ENCODE measurements at regions of chr14 and their contacts with region 1.

Region 1: GRCh38 chr14:81990312-81990761 is 456.7 kb upstream of the SEL1L start:
- DNase-seq: peak; percentile 26
- CTCF ChIP-seq: peak; percentile 88

Region 2: DNA sequence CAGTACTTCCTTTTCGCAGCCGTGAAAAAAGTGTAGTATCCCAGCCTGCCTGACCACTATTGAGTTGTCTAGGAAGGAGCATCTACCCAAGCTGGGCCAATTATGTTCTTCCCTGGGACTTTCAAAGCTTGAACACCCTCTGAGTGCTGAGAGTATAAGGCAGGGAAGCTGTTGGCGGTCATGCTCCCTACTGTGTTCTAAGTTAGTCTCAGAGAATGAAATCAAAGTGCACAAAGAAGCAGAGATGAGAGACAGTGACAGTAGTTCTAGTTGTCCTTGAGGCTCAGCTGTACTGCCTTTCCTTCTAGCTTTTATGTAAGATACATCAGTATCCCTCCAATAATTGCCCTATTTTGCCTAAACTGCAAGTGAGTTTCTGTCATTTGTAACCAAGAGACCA is 29.6 kb before region 1 on chr14:
- CTCF ChIA-PET with region 1: interaction called, 10 read pairs
- POLR2A ChIA-PET with region 1: no interaction called
- DNase-seq: no peak
- CTCF ChIP-seq: no peak

Region 3: GRCh38 chr14:81971911-81972310 is 18.4 kb before region 1 on chr14:
- CTCF ChIA-PET with region 1: interaction called, 11 read pairs
- POLR2A ChIA-PET with region 1: no interaction called
- DNase-seq: no peak
- CTCF ChIP-seq: no peak

Region 4: DNA sequence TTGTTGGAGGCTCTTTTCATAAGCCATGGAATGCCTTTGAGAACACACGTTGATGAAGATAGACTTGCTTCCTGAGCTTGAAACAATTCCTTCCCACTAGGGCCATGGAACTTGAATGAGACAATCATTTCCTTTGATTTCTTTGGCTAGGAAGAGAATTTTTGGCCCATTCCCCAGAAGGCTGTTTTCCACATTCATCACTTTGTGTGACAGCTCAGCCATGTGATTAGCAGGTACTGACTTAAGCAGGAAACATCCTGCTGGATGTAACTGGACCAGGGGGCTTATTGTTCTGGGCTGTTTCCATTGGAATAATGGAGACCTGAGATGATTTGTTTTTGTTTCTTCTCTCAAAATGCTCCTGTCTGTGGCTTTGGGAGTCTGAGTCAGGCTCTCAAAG is 13.1 kb after region 1 on chr14:
- CTCF ChIA-PET with region 1: interaction called, 44 read pairs
- POLR2A ChIA-PET with region 1: no interaction called
- DNase-seq: no peak
- CTCF ChIP-seq: no peak

Region 5: DNA sequence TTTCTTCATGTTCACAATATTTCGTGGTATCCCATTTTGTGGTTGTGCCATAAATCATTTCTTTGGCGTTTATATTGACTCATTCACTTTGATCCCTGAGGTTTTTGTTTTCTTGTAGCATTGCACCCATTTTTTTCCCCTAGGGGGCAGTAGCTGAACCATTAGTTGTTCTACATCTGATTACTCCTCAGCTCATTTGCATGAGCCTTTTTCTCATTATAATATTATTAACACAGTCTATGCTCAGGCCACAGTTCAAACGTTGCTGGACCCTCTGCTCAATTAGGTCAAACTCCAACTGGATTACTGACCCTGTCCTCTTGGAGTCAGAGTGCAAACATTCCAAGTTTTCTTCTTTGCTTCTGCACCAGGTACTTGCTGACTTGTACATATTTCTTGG is 18.7 kb after region 1 on chr14:
- CTCF ChIA-PET with region 1: interaction called, 44 read pairs
- POLR2A ChIA-PET with region 1: no interaction called
- DNase-seq: no peak
- CTCF ChIP-seq: no peak

Region 6: GRCh38 chr14:82067221-82067875 is 77.0 kb after region 1 on chr14:
- CTCF ChIA-PET with region 1: no interaction called
- POLR2A ChIA-PET with region 1: no interaction called
- DNase-seq: no peak
- CTCF ChIP-seq: no peak

Region 7: GRCh38 chr14:83071888-83072501 is 1081.7 kb after region 1 on chr14:
- CTCF ChIA-PET with region 1: interaction called, 10 read pairs
- POLR2A ChIA-PET with region 1: no interaction called
- DNase-seq: peak; percentile 8
- CTCF ChIP-seq: peak; percentile 62

Measured in GM10248 (cell line).